ENCODE measurements at regions of chr1 and their contacts with region 1.

Region 1: DNA sequence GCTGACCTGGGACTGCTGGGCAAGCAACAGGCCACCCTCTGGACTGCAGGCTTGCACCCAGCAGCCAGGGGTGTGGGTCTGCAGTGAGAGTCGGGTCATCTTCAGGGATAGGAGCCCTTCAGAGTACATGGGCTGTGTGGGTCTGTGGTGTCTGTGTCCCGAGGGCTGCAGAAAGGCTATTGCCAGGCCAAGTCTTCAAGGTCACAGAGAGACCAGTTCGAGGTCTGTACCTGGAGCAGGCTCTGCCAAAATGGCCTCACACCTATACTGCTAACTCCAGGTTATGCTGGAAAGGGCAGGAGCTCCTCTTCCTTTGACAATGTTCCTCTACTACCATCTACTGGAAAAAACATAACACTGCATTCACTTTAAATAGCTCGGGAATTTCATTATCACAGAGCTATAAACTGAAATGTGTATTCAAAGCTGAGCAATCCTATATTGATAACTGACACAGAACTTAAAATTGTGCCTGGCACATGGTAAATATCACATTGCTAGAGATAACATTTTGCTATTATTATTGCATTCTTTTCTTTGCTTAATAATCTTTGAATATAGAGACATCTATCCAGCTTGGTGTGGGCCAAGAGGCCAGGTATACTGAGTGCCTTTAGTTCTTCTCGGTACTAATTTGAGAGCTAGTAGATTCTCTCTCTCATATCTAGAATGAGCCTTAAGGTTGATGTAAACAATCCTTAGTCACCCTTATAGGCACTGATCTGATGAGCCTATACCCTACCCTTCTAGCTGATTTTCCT is 6.9 kb upstream of the DNAH14 start:
- DNase-seq: peak; percentile 39
- ATAC-seq: peak; percentile 97
- H3K4me3 ChIP-seq: no peak overlapping the region
- H3K27ac ChIP-seq: no peak overlapping the region
- H3K4me1 ChIP-seq: no peaks in the 10 kb centered on the region
- H3K27me3 ChIP-seq: no peaks in the 10 kb centered on the region
- CTCF ChIP-seq: peak; percentile 79
- POLR2A ChIP-seq: no peak
- RAD21 ChIP-seq: peak; percentile 79

Region 2: DNA sequence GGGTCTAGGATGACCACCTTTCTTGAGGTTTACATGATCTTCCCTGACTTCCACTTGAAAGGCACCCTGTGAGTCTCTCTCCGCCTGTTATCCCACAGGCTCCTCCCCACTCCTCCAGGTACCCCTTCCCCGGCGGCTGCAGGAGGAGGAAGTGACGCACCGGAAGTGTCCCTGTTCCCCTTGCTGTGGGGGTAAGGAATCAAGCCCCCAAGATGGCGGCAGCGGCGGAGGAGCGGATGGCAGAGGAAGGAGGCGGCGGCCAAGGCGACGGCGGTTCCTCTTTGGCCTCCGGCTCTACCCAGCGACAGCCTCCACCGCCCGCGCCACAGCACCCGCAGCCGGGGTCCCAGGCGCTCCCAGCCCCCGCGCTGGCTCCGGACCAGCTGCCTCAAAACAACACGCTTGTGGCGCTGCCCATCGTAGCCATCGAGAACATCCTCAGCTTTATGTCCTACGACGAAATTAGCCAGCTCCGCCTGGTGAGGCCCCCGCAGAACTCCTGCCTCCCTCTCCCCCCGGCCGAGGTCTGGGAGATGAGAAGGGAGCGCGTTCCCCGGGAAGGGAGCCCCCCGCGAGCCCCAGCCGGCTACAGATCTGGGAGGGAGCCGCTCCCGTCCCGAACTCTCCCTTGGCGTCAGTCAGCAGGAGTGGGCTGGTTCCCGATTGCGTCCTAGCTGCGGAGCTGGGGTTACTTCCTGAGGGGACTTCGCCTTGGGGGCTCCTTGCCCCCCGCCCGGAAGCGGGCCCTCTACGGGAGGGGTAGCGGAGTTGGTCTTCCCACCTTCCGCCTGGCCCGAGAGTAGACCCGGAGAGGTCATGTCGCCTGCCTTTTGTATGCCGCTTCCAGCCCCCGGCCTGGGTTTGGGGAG is 808.4 kb before region 1 on chr1 and contains the start of gene FBXO28:
- CTCF ChIA-PET with region 1: interaction called, 3 read pairs
- POLR2A ChIA-PET with region 1: no interaction called
- dilution Hi-C with region 1: no loop called
- in situ Hi-C with region 1: no loop called
- intact Hi-C with region 1: loop called (anchors 5 kb)
- DNase-seq: peak; percentile 95
- ATAC-seq: peak; percentile 98
- H3K4me3 ChIP-seq: peak within 1 kb of the TSS; percentile 75
- H3K27ac ChIP-seq: peak within 1 kb of the TSS; percentile 72
- H3K4me1 ChIP-seq: no peaks in the 10 kb centered on the region
- H3K27me3 ChIP-seq: no peaks in the 10 kb centered on the region
- CTCF ChIP-seq: no peak
- POLR2A ChIP-seq: peak; percentile 90
- RAD21 ChIP-seq: no peak
- total RNA-seq, gene FBXO28: 22.6 and 30.0 TPM in 2 replicates

Region 3: GRCh38 chr1:224434691-224435317 is 487.8 kb before region 1 on chr1 and contains the start of gene WDR26:
- CTCF ChIA-PET with region 1: no interaction called
- POLR2A ChIA-PET with region 1: no interaction called
- dilution Hi-C with region 1: no loop called
- in situ Hi-C with region 1: no loop called
- intact Hi-C with region 1: loop called (anchors 10 kb)
- DNase-seq: peak; percentile 80
- ATAC-seq: peak; percentile 74
- H3K4me3 ChIP-seq: peak within 1 kb of the TSS; percentile 77
- H3K27ac ChIP-seq: peak within 1 kb of the TSS; percentile 99
- H3K4me1 ChIP-seq: peaks cover 4% of the 10 kb centered on the region; the same call in 1 of the 2 replicates
- H3K27me3 ChIP-seq: no peaks in the 10 kb centered on the region
- CTCF ChIP-seq: 0 out of 2 replicates have a peak, but pooled peaks have one; percentile 8
- POLR2A ChIP-seq: peak; percentile 90
- RAD21 ChIP-seq: no peak
- total RNA-seq, gene WDR26: 23.8 and 41.4 TPM in 2 replicates

Region 4: DNA sequence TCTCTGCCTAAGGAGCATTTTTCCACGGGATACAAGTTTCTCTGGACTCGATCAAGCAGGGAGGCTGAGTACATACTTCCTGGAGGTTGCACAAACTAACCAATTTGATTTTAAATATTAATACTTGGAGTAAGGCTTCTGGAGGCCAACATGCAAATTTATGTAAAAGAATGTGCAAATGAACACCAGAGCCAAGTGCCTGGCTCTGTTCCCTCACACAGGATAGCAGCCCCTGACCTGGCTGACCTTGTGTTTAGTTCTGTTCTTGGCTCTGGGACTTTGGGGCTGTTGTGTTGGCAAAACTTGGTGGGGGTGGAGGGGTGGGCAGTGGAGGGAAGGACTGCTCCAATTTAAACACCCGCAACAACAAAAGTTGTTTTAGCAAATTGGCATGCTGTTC is 272.3 kb before region 1 on chr1:
- CTCF ChIA-PET with region 1: interaction called, 3 read pairs
- POLR2A ChIA-PET with region 1: no interaction called
- dilution Hi-C with region 1: no loop called
- in situ Hi-C with region 1: no loop called
- intact Hi-C with region 1: loop called (anchors 5 kb)
- DNase-seq: no peak
- ATAC-seq: peak; percentile 9; the same call in 1 of the 2 replicates
- H3K4me3 ChIP-seq: no peak overlapping the region
- H3K27ac ChIP-seq: no peak overlapping the region
- H3K4me1 ChIP-seq: peaks cover 6% of the 10 kb centered on the region
- H3K27me3 ChIP-seq: no peaks in the 10 kb centered on the region
- CTCF ChIP-seq: no peak
- POLR2A ChIP-seq: no peak
- RAD21 ChIP-seq: no peak

Region 5: GRCh38 chr1:225228841-225229303 is 306.3 kb after region 1 on chr1:
- CTCF ChIA-PET with region 1: no interaction called
- POLR2A ChIA-PET with region 1: no interaction called
- dilution Hi-C with region 1: no loop called
- in situ Hi-C with region 1: no loop called
- intact Hi-C with region 1: no loop called
- DNase-seq: no peak
- ATAC-seq: no peak
- H3K4me3 ChIP-seq: no peak overlapping the region
- H3K27ac ChIP-seq: no peak overlapping the region
- H3K4me1 ChIP-seq: no peaks in the 10 kb centered on the region
- H3K27me3 ChIP-seq: no peaks in the 10 kb centered on the region
- CTCF ChIP-seq: no peak
- POLR2A ChIP-seq: no peak
- RAD21 ChIP-seq: no peak

Region 6: GRCh38 chr1:225977937-225978748 is 1055.6 kb after region 1 on chr1:
- CTCF ChIA-PET with region 1: no interaction called
- POLR2A ChIA-PET with region 1: no interaction called
- dilution Hi-C with region 1: no loop called
- in situ Hi-C with region 1: no loop called
- intact Hi-C with region 1: loop called (anchors 10 kb)
- DNase-seq: no peak
- ATAC-seq: no peak
- H3K4me3 ChIP-seq: no peak overlapping the region
- H3K27ac ChIP-seq: no peak overlapping the region
- H3K4me1 ChIP-seq: no peaks in the 10 kb centered on the region
- H3K27me3 ChIP-seq: no peaks in the 10 kb centered on the region
- CTCF ChIP-seq: no peak
- POLR2A ChIP-seq: no peak
- RAD21 ChIP-seq: no peak